CD4-positive, alpha-beta memory T cell (primary cell): ENCODE measurements at regions of chr1 and their contacts with region 1.

Region 1: DNA sequence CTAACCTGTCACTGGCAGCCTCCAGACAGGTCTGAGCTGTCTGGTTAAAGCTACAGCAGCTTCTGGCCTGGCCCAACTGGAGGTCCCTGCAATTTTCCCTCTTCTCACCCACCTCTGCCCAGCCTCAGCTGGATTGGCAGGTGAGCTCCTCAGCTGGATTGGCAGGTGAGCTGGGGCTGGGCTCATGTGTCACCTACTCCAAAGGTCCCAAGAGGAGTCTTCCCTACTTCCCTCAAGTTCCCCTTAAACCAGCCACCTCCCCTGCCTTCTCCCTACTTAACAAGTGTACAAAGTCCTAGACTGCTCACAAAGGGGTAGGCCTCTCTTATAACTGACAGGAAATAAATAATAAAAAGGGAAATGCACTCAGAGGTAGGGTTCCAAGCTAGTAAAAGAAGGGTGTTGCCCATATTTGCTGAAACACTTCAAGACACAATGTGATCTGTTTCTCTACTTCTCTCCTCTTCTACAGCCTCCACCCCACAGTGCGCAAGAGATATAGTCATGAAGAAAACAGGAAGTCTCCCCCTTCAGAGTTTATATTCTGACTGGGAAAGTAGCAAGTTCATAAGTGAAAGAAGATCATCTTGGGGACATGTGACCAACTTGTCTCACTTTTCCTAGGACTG is at the start of gene GPA33:
- DNase-seq: peak in 4 of 5 donors; percentile 60 to 70 (median 64)
- H3K4me3 ChIP-seq: peak within 1 kb of the TSS; percentile 2 to 44
- H3K4me3 Mint-ChIP-seq: peak within 1 kb of the TSS; percentile 73 to 88 (median 81)
- H3K27ac ChIP-seq: peak within 1 kb of the TSS; percentile 51
- H3K27ac Mint-ChIP-seq: peak within 1 kb of the TSS; percentile 89 to 98 (median 95)
- H3K4me1 ChIP-seq: peaks cover 42% of the 10 kb centered on the region
- H3K4me1 Mint-ChIP-seq: peaks cover 17 to 45% (median 34%) of the 10 kb centered on the region in 4 donors
- H3K27me3 ChIP-seq: no peaks in the 10 kb centered on the region
- H3K27me3 Mint-ChIP-seq: peaks cover 0 to 2% of the 10 kb centered on the region in 2 donors
- total RNA-seq, gene GPA33: 21.2 to 21.6 TPM

Region 2: DNA sequence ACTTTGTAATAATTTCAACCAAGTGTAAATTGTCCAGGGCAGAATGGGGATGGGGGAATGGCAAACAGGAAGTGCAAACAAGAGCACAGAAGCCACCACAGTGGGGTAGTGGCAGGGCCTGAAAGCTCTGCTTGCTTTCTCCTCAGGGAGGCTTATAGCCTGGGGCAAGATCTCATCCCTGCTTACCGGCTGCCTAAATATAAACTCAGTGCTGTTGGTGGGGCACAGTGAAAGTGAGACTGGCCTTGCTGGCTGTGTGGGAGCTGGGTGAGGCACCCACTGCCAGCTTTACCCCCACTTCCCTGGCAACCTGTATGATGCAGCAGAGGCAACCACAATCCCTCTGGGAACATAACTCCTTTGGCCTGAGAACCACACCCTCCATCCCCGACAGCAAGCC is 18.7 kb after region 1 on chr1:
- CTCF ChIA-PET with region 1: interaction called, 3 read pairs
- POLR2A ChIA-PET with region 1: interaction called, 27 read pairs
- intact Hi-C with region 1: no loop called
- DNase-seq: no peak
- H3K4me3 ChIP-seq: no peak overlapping the region
- H3K4me3 Mint-ChIP-seq: peak overlapping the region in 3 of 8 donors; percentile 45 to 71 (median 60)
- H3K27ac ChIP-seq: no peak overlapping the region
- H3K27ac Mint-ChIP-seq: peak overlapping the region; percentile 41 to 93 (median 73)
- H3K4me1 ChIP-seq: peaks cover 26% of the 10 kb centered on the region
- H3K4me1 Mint-ChIP-seq: peaks cover 41 to 52% (median 49%) of the 10 kb centered on the region in 4 donors
- H3K27me3 ChIP-seq: no peaks in the 10 kb centered on the region
- H3K27me3 Mint-ChIP-seq: no peaks in the 10 kb centered on the region

Region 3: DNA sequence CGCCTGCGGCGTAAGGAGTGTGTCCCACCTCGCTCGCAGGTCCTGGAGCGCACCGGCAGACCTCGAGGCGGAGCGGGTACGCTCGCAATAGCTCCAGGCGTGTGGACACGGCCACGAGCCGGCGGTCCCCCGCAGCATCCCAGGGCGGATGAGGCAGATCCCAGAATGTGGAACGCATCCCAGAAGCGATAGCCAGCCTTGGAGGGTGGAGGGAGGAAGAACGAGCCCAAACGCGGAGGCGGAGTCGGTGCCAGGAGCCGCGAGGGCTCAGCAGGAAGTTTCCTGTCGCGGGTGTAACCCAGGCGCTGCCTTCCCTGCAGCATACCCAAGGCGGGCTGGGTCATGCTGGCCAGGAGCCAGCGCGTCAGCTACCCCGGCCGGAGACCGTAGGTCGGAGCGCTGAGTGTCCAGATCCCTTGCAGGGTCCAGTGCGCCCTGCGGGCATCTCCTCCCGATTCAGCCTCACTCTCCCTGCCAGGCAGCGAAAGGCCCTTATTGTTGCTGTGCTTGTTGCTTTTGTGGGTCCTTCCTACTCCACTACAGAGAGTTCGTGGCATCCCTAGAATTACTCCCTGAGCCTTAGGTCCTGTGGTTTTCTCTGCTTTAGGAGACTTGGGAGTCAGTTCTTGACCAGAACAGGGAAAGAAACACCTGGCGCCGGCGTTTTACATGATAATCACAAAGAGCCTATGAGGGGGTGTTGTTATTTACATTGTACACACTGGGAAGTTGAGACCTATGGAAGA is 31.1 kb after region 1 on chr1:
- CTCF ChIA-PET with region 1: interaction called, 12 read pairs
- POLR2A ChIA-PET with region 1: interaction called, 10 read pairs
- intact Hi-C with region 1: no loop called
- DNase-seq: peak in 4 of 5 donors; percentile 18 to 40 (median 27)
- H3K4me3 ChIP-seq: peak overlapping the region; percentile 47 to 49
- H3K4me3 Mint-ChIP-seq: peak overlapping the region; percentile 78 to 93 (median 86)
- H3K27ac ChIP-seq: no peak overlapping the region
- H3K27ac Mint-ChIP-seq: peak overlapping the region in 3 of 7 donors; percentile 22 to 60 (median 36)
- H3K4me1 ChIP-seq: peaks cover 7% of the 10 kb centered on the region
- H3K4me1 Mint-ChIP-seq: peaks cover 0 to 12% (median 3%) of the 10 kb centered on the region in 4 donors
- H3K27me3 ChIP-seq: no peaks in the 10 kb centered on the region
- H3K27me3 Mint-ChIP-seq: peaks cover 1 to 7% of the 10 kb centered on the region in 2 donors

Region 4: GRCh38 chr1:167563579-167564246 is 473.3 kb after region 1 on chr1:
- CTCF ChIA-PET with region 1: no interaction called
- POLR2A ChIA-PET with region 1: no interaction called
- intact Hi-C with region 1: no loop called
- DNase-seq: no peak
- H3K4me3 ChIP-seq: no peak overlapping the region
- H3K4me3 Mint-ChIP-seq: no peak overlapping the region
- H3K27ac ChIP-seq: no peak overlapping the region
- H3K27ac Mint-ChIP-seq: peak overlapping the region in 1 of 7 donors; percentile 42
- H3K4me1 ChIP-seq: no peaks in the 10 kb centered on the region
- H3K4me1 Mint-ChIP-seq: peaks cover 0 to 1% (median 0%) of the 10 kb centered on the region in 4 donors
- H3K27me3 ChIP-seq: no peaks in the 10 kb centered on the region
- H3K27me3 Mint-ChIP-seq: peaks cover 0 to 1% of the 10 kb centered on the region in 2 donors